ENCODE measurements at regions of chr19 and their contacts with region 1.

Region 1: GRCh38 chr19:10194500-10195289 is at the start of gene DNMT1:
- DNase-seq: peak; percentile 92 to 97 (median 95)
- ATAC-seq: peak; percentile 96
- H3K4me3 ChIP-seq: peak within 1 kb of the TSS; percentile 97 to 99
- H3K4me3 Mint-ChIP-seq: peak within 1 kb of the TSS; percentile 96
- H3K27ac ChIP-seq: peak within 1 kb of the TSS; percentile 66 to 76
- H3K27ac Mint-ChIP-seq: peak within 1 kb of the TSS; percentile 91
- H3K4me1 ChIP-seq: peaks cover 16% of the 10 kb centered on the region
- H3K4me1 Mint-ChIP-seq: peaks cover 33% of the 10 kb centered on the region
- H3K27me3 ChIP-seq: no peaks in the 10 kb centered on the region
- H3K27me3 Mint-ChIP-seq: no peaks in the 10 kb centered on the region
- CTCF ChIP-seq: no peak
- total RNA-seq, gene DNMT1: 135 to 154 TPM

Region 2: GRCh38 chr19:10126213-10126639 is 68.5 kb before region 1 on chr19:
- CTCF ChIA-PET with region 1: no interaction called
- POLR2A ChIA-PET with region 1: no interaction called
- intact Hi-C with region 1: no loop called
- DNase-seq: no peak
- ATAC-seq: no peak
- H3K4me3 ChIP-seq: no peak overlapping the region
- H3K4me3 Mint-ChIP-seq: no peak overlapping the region
- H3K27ac ChIP-seq: no peak overlapping the region
- H3K27ac Mint-ChIP-seq: no peak overlapping the region
- H3K4me1 ChIP-seq: no peaks in the 10 kb centered on the region
- H3K4me1 Mint-ChIP-seq: no peaks in the 10 kb centered on the region
- H3K27me3 ChIP-seq: no peaks in the 10 kb centered on the region
- H3K27me3 Mint-ChIP-seq: no peaks in the 10 kb centered on the region
- CTCF ChIP-seq: no peak

Region 3: GRCh38 chr19:10142701-10143375 is 51.9 kb before region 1 on chr19:
- CTCF ChIA-PET with region 1: interaction called, 3 read pairs
- POLR2A ChIA-PET with region 1: interaction called, 15 read pairs
- intact Hi-C with region 1: loop called in 1 of 2 experiments (anchors 10 kb)
- DNase-seq: peak; percentile 19 to 86 (median 58)
- ATAC-seq: peak; percentile 94
- H3K4me3 ChIP-seq: peak overlapping the region; percentile 11 to 45
- H3K4me3 Mint-ChIP-seq: peak overlapping the region; percentile 76
- H3K27ac ChIP-seq: peak overlapping the region; percentile 80 to 94
- H3K27ac Mint-ChIP-seq: peak overlapping the region; percentile 98
- H3K4me1 ChIP-seq: peaks cover 45% of the 10 kb centered on the region
- H3K4me1 Mint-ChIP-seq: peaks cover 42% of the 10 kb centered on the region
- H3K27me3 ChIP-seq: no peaks in the 10 kb centered on the region
- H3K27me3 Mint-ChIP-seq: no peaks in the 10 kb centered on the region
- CTCF ChIP-seq: peak; percentile 29

Region 4: DNA sequence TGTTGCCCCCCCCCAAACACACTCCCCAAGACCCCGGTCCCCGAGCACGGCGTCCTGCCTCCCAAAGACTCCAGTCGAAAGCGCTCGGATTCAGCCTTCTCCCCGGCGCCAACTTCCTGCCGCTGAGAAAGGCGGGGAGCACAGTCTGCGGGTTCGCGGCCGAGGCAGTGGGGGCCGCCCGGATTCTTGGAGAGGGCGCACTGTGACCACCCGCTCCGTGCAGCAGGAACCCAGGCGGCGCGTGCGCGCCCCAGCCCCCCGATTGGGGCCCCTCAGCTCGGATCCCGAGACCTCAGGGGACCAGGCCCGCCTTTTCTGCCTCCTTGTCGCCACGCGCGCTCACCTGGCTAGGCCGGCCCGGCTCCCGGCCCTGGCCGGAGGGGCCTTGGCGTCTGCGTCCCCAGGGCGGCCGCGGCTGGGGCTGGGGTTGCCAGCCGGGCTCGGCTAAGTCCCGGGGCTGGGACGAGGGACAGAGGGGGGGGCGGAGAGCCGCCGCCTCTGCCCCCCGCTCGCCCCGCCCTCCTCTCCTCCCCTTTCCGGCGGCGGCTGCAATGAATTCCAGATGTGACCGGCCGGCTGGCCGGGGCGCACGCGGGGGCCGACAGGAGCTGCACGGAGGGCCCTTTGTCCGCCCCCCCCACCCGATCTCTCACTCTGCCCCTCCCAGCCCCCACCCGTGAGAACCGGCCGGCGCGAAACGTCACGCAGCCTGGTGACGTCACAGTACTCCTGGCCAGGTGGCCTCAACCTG is 36.3 kb after region 1 on chr19 and contains the start of gene S1PR2:
- CTCF ChIA-PET with region 1: interaction called, 3 read pairs
- POLR2A ChIA-PET with region 1: no interaction called
- intact Hi-C with region 1: loop called (anchors 2 to 5 kb)
- DNase-seq: peak; percentile 47 to 88 (median 68)
- ATAC-seq: peak; percentile 48
- H3K4me3 ChIP-seq: peak within 1 kb of the TSS; percentile 84 to 90
- H3K4me3 Mint-ChIP-seq: peak within 1 kb of the TSS; percentile 86
- H3K27ac ChIP-seq: peak within 1 kb of the TSS; percentile 67 to 84
- H3K27ac Mint-ChIP-seq: peak within 1 kb of the TSS; percentile 86
- H3K4me1 ChIP-seq: peaks cover 20% of the 10 kb centered on the region
- H3K4me1 Mint-ChIP-seq: peaks cover 24% of the 10 kb centered on the region
- H3K27me3 ChIP-seq: no peaks in the 10 kb centered on the region
- H3K27me3 Mint-ChIP-seq: no peaks in the 10 kb centered on the region
- CTCF ChIP-seq: no peak
- total RNA-seq, gene S1PR2: 13.3 to 14.8 TPM

Region 5: GRCh38 chr19:10238172-10238783 is 43.6 kb after region 1 on chr19:
- CTCF ChIA-PET with region 1: no interaction called
- POLR2A ChIA-PET with region 1: no interaction called
- intact Hi-C with region 1: loop called (anchors 2 to 5 kb)
- DNase-seq: no peak
- ATAC-seq: no peak
- H3K4me3 ChIP-seq: no peak overlapping the region
- H3K4me3 Mint-ChIP-seq: no peak overlapping the region
- H3K27ac ChIP-seq: no peak overlapping the region
- H3K27ac Mint-ChIP-seq: peak overlapping the region; percentile 60
- H3K4me1 ChIP-seq: peaks cover 18% of the 10 kb centered on the region
- H3K4me1 Mint-ChIP-seq: peaks cover 21% of the 10 kb centered on the region
- H3K27me3 ChIP-seq: no peaks in the 10 kb centered on the region
- H3K27me3 Mint-ChIP-seq: no peaks in the 10 kb centered on the region
- CTCF ChIP-seq: no peak

Region 6: DNA sequence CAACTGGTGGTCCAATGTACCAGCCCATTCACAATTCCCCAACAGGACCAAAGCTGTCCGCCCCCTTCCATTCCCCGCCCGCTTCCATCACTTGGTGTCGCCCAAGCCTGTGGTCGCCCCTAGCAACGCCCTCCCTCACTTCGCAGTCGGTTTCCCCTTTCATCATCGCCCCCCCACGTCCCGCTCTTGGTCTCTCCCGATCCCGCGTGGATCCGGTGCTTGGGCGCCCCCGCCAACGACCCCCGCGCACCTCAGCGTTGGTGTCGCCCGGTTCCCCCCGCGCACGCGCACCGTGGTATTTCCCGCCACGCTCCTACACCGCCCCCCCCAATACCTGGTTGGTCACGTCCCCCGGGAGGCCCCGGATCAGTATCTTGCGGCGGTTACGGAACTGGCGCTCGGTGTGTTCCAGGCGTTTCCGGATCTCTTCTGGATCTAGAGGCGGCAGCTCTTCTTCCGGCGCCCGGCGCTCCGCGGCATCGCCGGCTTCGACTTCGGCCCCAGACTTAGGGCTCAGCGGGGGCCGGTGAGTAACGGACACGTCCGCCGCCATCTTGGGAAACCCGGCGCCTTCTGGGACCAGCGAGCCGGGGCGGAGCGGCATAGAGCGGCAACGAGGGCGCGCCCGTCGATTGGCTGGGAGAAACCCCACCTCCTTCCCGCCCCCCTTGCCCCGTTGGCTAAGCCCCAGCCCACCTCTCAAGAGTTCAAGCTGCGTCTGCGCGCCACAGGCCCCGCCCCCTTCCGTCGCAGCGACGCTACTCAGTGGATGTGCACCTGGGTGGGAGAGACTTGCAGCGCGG is 138.5 kb after region 1 on chr19 and contains the start of gene RAVER1:
- CTCF ChIA-PET with region 1: no interaction called
- POLR2A ChIA-PET with region 1: no interaction called
- intact Hi-C with region 1: loop called (anchors 1 to 2 kb)
- DNase-seq: peak; percentile 94 to 99 (median 98)
- ATAC-seq: peak; percentile 96
- H3K4me3 ChIP-seq: peak within 1 kb of the TSS; percentile 93 to 97
- H3K4me3 Mint-ChIP-seq: peak within 1 kb of the TSS; percentile 95
- H3K27ac ChIP-seq: peak within 1 kb of the TSS; percentile 76 to 95
- H3K27ac Mint-ChIP-seq: peak within 1 kb of the TSS; percentile 93
- H3K4me1 ChIP-seq: peaks cover 30% of the 10 kb centered on the region
- H3K4me1 Mint-ChIP-seq: peaks cover 35% of the 10 kb centered on the region
- H3K27me3 ChIP-seq: no peaks in the 10 kb centered on the region
- H3K27me3 Mint-ChIP-seq: no peaks in the 10 kb centered on the region
- CTCF ChIP-seq: no peak
- total RNA-seq, gene RAVER1: 33.3 to 33.6 TPM